ENCODE measurements at regions of chr14 and their contacts with region 1.

Region 1: GRCh38 chr14:31622060-31622459 is 60.9 kb downstream of the NUBPL start:
- DNase-seq: no peak
- CTCF ChIP-seq: no peak

Region 2: DNA sequence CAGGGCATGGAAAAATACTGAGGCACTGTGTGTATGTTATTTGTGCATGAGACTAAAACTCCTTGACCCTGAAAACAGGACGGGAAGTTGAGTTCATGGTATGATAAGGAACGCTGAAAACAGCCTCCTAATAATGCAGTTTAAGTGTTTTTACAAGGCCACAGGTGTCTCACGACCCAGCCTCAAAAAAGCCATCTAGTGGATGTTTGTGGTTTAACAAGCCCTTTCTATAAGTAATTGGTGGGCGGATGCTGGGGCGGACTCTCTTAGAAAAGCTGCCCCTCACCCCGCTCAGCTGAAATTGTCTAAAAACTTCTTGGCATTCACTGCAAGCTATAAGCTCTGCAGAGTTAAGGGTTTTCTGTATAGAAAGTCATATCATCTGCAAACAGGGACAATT is 123.7 kb after region 1 on chr14:
- in situ Hi-C with region 1: loop called (anchors 25 kb)
- DNase-seq: no peak
- CTCF ChIP-seq: no peak

Measured in GM13976 (cell line).